AG04450 (cell line): ENCODE measurements at regions of chr20 and their contacts with region 1.

Region 1: GRCh38 chr20:47272893-47273590 is 83.5 kb downstream of the ZMYND8 start:
- DNase-seq: peak; percentile 20
- H3K4me3 ChIP-seq: no peak overlapping the region
- H3K27ac ChIP-seq: peak overlapping the region; percentile 42
- H3K27me3 ChIP-seq: no peaks in the 10 kb centered on the region
- CTCF ChIP-seq: peak; percentile 87

Region 2: DNA sequence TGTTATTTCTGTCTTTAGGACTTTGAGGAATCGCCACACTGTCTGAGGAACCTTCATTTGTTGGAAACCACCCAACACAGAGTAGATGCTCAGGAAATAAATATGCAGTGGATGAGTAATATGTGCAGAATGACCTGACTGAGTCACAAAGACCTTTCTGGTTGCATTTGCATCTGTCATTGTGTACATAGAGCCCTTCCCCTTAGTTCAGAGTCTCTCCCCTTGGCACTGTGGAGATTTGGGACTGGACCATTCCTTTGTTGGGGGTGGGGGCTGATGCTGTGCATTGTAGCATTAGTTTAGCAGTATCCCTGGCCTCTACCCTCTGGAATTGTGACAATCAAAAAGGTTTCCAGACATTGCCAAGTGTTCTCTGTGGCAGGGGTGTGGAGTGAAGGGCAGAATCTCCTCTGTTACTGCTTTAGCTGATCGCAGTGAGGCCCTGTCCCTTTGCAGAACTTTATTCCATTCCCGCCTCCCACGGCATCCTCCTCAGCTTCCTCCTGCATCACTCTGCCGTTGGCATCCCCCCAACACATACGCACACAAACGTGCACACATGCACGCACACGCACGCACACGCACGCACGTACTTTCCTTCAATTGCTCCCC is 313.9 kb before region 1 on chr20:
- CTCF ChIA-PET with region 1: no interaction called
- POLR2A ChIA-PET with region 1: no interaction called
- DNase-seq: peak; percentile 86
- H3K4me3 ChIP-seq: no peak overlapping the region
- H3K27ac ChIP-seq: peak overlapping the region; percentile 79
- H3K27me3 ChIP-seq: no peaks in the 10 kb centered on the region
- CTCF ChIP-seq: no peak

Region 3: GRCh38 chr20:47139857-47140535 is 133.0 kb before region 1 on chr20:
- CTCF ChIA-PET with region 1: no interaction called
- POLR2A ChIA-PET with region 1: no interaction called
- DNase-seq: no peak
- H3K4me3 ChIP-seq: no peak overlapping the region
- H3K27ac ChIP-seq: no peak overlapping the region
- H3K27me3 ChIP-seq: no peaks in the 10 kb centered on the region
- CTCF ChIP-seq: no peak

Region 4: DNA sequence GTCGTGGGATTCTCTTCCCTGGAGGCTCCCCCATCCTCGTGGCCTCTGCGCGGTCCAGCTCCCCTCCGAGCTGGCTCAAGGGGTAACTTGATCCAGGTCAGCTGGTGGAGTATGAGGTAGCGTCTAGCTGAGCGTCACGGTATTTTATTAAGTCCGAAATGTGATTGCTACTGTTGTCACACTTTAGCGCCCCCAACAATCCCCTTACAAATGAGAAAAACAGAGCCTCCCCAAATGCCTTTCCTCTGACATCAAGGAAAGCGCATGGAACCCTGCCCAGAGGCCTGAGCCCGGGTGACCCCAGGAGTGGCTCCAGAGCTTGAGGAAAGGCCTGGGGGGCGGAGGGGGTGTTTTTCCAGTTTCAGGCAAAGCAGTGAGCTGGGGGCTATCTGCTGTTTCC is 108.9 kb before region 1 on chr20:
- CTCF ChIA-PET with region 1: no interaction called
- POLR2A ChIA-PET with region 1: no interaction called
- DNase-seq: no peak
- H3K4me3 ChIP-seq: no peak overlapping the region
- H3K27ac ChIP-seq: no peak overlapping the region
- H3K27me3 ChIP-seq: no peaks in the 10 kb centered on the region
- CTCF ChIP-seq: no peak

Region 5: GRCh38 chr20:47196091-47197081 is 76.7 kb before region 1 on chr20:
- CTCF ChIA-PET with region 1: interaction called, 16 read pairs
- POLR2A ChIA-PET with region 1: no interaction called
- DNase-seq: no peak
- H3K4me3 ChIP-seq: no peak overlapping the region
- H3K27ac ChIP-seq: no peak overlapping the region
- H3K27me3 ChIP-seq: no peaks in the 10 kb centered on the region
- CTCF ChIP-seq: peak; percentile 94

Region 6: GRCh38 chr20:47253872-47254271 is 19.2 kb before region 1 on chr20:
- CTCF ChIA-PET with region 1: interaction called, 22 read pairs
- POLR2A ChIA-PET with region 1: no interaction called
- DNase-seq: no peak
- H3K4me3 ChIP-seq: no peak overlapping the region
- H3K27ac ChIP-seq: no peak overlapping the region
- H3K27me3 ChIP-seq: no peaks in the 10 kb centered on the region
- CTCF ChIP-seq: no peak

Region 7: DNA sequence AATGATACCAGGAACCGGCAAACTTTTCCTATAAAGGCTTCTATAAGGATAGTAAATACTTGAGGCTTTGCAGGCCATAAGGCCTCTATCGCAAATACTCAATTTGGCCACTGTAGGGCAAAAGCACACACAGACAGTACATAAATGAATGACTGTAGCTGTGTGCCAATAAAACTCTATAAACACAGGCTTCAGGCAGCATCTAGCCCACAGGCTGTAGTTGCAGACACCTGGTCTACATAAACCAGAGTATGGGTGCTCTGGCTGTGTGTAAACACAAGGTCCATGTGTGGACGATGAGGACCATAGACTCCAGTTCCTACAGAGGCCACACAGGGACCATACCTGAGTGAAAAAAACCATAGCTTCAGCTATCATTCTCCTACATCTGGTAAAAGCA is 31.2 kb after region 1 on chr20:
- CTCF ChIA-PET with region 1: interaction called, 24 read pairs
- POLR2A ChIA-PET with region 1: no interaction called
- DNase-seq: no peak
- H3K4me3 ChIP-seq: no peak overlapping the region
- H3K27ac ChIP-seq: peak overlapping the region; percentile 52
- H3K27me3 ChIP-seq: no peaks in the 10 kb centered on the region
- CTCF ChIP-seq: peak; percentile 43

Region 8: GRCh38 chr20:47370850-47371676 is 98.0 kb after region 1 on chr20:
- CTCF ChIA-PET with region 1: interaction called, 13 read pairs
- POLR2A ChIA-PET with region 1: no interaction called
- DNase-seq: no peak
- H3K4me3 ChIP-seq: no peak overlapping the region
- H3K27ac ChIP-seq: no peak overlapping the region
- H3K27me3 ChIP-seq: no peaks in the 10 kb centered on the region
- CTCF ChIP-seq: no peak

Region 9: GRCh38 chr20:47620808-47621805 is 348.1 kb after region 1 on chr20:
- CTCF ChIA-PET with region 1: interaction called, 46 read pairs
- POLR2A ChIA-PET with region 1: no interaction called
- DNase-seq: peak; percentile 37
- H3K4me3 ChIP-seq: no peak overlapping the region
- H3K27ac ChIP-seq: no peak overlapping the region
- H3K27me3 ChIP-seq: no peaks in the 10 kb centered on the region
- CTCF ChIP-seq: peak; percentile 85